ENCODE measurements at regions of chr3 and their contacts with region 1.

Region 1: GRCh38 chr3:69691860-69692259 is 47.4 kb upstream of the MITF start:
- DNase-seq: no peak
- ATAC-seq: no peak
- H3K4me3 ChIP-seq: no peak overlapping the region
- H3K27ac ChIP-seq: no peak overlapping the region
- H3K4me1 ChIP-seq: peaks cover 1% of the 10 kb centered on the region
- H3K27me3 ChIP-seq: no peaks in the 10 kb centered on the region

Region 2: DNA sequence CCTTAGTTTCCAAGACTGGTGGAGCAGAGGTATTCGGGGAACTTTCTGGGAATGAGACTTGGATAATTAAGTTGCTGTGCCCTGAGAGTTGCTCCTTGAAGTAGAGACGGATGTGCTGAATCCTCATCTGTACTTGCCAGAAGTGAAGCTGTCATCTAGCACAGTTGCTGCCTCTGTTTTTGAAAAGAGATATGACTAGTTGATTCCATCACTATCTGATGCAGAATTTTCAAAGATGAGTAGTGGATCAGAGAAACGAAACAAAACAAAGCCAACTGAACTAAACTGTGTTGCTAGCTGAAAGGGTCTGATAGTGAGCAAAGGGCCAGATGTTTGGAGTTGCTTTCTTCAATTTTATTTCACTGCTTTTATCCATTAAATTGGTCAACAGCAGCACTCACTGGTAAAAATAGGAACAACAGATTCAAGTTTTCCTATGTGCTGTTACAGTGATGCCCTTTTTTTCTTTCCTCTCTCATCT is 100.1 kb after region 1 on chr3:
- intact Hi-C with region 1: loop called (anchors 5 to 10 kb)
- DNase-seq: no peak
- ATAC-seq: peak; percentile 59 to 63
- H3K4me3 ChIP-seq: no peak overlapping the region
- H3K27ac ChIP-seq: peak overlapping the region; percentile 50
- H3K4me1 ChIP-seq: peaks cover 3% of the 10 kb centered on the region
- H3K27me3 ChIP-seq: no peaks in the 10 kb centered on the region

Region 3: DNA sequence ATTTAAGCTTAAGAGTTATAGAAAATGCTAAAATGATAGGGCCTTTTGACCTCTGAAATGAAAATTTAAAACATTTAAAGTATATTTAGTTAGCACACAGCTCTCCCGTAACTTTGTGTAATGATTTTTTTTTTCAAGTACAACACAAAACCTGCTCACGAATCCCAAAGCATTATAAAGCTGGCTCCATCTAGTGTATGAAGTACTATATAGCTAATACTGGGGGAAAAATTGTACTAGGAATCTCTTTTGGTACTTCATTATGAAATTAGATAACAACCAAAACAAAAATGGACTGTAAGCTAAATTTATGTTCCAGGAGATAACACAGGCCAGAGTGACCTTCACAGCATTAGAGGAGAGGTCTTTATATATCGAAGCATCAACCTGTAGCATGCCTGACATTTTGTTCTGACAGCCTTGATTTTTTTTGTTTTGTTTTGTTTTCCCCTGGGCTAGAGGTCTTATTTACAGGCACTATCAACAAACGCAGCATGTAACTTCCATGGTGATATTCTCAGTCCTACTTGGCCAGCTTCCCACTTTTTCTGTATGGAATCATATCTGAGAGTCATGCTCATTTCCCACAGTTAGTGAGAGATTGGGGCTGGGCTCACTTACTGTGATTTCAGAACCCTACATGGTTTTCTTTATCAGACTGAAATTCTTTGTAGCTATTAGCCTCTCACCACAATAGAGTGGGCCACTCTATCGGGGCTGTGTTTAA is 163.7 kb after region 1 on chr3:
- intact Hi-C with region 1: loop called in 3 of 4 experiments (anchors 10 kb)
- DNase-seq: no peak
- ATAC-seq: peak; percentile 54 to 55
- H3K4me3 ChIP-seq: no peak overlapping the region
- H3K27ac ChIP-seq: peak overlapping the region; percentile 64
- H3K4me1 ChIP-seq: peaks cover 7% of the 10 kb centered on the region
- H3K27me3 ChIP-seq: no peaks in the 10 kb centered on the region

Region 4: DNA sequence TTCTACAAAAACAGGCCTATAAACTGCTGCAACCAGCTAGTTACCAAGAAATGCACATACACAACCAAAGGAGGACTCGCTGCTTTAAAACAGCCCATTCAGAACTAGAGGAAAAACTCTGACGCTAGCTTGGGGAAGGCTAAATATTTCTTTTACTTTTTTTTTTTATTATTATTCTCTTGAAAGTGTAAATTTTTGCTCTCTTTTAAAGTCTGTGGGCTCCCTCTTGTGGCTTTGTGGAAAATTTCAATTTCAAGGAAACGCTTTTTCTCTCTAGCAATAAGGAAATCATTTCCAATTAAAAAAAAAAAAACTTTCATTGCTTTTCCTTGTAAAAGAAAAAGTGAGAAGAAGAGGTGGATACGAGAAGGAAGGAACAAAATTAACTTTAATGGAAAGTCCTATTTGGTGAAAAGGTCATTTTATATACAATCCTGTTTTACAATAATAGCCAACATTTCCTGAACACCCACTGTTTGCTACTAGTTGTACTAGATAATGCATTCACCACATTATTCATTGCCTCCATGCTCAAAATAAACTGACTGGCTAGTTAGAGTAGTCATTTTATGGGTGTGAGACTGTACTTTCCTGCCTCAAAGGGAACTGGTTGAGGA is 256.5 kb after region 1 on chr3:
- intact Hi-C with region 1: loop called (anchors 2 to 10 kb)
- DNase-seq: no peak
- ATAC-seq: no peak
- H3K4me3 ChIP-seq: no peak overlapping the region
- H3K27ac ChIP-seq: no peak overlapping the region
- H3K4me1 ChIP-seq: no peaks in the 10 kb centered on the region
- H3K27me3 ChIP-seq: no peaks in the 10 kb centered on the region